HEK293T (cell line): ENCODE measurements at regions of chr17 and their contacts with region 1.

Region 1: DNA sequence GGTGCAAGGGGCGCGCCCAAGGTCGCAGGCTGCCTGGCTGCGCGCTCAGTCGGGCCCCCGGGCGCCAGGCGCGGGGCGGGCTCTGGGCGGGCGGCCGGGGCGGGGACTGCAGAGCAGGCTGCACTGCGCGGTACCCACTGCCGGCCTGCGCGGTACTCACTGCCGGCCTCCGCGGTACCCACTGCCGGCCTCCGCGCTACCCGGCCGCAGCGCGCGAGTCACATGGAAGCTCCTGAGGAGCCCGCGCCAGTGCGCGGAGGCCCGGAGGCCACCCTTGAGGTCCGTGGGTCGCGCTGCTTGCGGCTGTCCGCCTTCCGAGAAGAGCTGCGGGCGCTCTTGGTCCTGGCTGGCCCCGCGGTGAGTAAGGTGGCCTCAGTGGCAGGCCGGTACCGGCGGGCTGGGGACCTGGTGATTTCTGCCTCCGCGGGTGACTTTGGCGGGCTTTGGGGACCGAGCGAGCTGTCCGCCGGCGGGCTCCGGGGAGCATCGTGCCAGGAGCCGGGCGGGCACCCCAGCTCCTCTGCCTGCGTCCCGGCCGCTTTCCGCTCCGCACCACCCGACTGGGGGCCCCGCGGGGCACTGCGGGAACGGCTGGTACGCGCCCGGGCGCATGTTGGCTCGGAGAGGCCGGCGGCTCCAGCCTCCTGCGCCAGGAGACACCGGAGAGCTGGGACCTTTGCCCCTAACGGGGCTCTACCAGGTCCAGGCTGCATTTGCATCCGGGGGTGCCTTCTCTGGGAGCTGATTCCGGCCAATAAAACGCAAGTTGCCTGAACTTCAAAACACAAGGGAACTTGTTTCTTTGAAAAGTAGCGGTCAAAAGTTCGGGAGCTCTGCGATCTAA is at the start of gene SLC47A1:
- DNase-seq: peak; percentile 72

Region 2: GRCh38 chr17:19447085-19447583 is 86.8 kb before region 1 on chr17:
- CTCF ChIA-PET with region 1: no interaction called
- POLR2A ChIA-PET with region 1: no interaction called
- DNase-seq: peak; percentile 75

Region 3: DNA sequence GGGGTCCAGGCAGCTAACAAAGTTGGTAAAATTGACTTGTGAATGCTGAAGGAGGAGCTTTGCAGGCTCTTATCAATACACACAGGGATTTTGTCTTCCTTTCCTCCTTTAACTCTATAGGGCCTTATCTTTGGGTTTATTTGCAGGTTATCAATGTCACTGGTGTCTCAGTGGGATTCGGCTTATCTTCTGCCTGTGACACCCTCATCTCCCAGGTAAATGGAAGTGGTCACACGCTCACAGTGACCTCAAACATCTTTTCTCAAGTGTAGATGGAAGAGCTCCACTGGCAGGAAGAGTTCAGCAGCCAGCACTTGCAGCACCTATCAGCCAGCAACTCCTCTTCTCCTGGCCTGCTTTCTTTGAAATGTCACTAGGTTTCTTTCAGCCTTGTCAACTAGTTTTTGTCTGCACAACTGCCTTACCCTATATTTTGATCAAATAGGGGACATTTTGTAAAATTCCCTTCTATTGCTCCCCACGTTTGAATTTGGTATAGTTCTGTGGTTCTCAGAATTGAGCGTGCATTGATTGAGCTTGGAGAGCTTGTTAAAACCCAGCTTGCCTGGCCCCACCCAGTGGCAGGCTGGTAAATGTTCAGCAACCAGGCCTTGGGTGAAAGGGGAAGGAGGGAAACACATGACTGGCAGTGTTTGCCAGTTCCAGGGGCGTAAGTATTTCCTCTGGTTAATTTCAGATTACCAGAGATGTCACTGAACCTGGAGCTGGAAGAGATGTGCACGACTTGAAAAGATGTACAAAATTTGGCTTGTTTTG is 12.5 kb after region 1 on chr17:
- CTCF ChIA-PET with region 1: no interaction called
- POLR2A ChIA-PET with region 1: interaction called, 10 read pairs
- DNase-seq: no peak